Head of caudate nucleus (tissue), 42 donors: ENCODE measurements at regions of chr17 and their contacts with region 1.

Region 1: DNA sequence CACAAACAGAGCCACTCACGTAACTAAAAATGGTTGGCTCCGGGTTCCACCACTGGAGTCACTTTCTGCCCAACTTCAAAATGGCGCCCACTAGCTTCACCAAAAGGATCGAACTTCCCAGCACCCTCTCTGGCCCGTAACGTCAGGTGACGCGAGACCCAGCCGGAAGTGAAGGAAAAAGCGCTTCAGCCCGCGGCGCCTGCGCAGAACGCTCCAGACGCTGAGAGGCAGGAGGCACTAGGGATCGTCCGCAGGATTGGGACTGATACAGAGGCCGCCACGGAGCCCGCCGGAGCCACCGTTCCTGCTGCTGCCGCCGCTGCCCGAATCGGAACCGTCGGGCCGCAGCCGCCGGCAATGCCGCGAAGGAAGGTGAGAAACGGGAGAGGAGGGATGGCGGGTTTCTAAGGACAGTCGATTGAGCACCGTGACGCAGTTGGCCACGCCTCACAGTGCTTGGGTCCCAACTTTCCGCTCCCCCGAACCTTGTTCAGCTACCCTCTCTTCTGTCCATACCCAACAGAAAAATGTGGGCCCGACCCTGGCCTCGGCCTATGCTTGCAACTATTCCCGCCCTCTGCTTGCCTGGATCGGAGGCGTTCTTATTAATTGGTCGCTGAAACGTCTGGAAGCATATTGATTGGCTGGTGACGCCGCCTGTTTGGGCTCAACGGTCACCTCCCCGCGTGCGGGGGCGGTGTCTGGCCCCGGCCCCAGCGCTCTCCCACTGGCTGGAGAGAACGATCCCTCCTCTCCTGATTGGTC is at the start of gene KAT7:
- DNase-seq: peak; percentile 97 to 100 (median 99)

Region 2: DNA sequence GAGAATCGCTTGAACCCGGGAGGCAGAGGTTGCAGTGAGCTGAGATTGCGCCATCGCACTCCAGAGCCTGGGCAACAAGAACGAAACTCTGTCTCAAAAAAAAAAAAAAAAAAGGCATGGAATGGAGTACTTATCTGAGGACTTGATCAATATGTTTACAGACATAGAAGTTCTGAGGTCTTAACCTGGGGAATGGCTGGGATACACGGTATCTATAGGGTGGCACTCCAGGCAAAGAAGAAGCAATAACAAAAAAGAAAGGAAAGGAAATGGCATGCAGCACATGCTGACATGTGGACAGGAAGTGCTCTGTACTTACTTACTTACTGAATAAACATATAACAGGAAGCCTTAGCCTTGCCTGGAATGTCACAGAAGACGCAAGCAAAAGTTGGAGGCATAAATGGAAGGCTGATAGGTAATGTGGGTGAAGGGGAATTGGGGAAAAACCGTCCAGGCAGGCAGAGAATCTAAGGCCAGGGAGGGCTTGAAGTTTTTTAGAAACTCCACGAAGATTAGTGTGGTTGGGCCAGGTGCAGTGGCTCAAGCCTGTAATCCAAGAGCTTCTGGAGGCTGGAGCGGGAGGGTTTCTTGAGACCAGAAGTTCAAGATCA is 100.7 kb before region 1 on chr17:
- intact Hi-C with region 1: no loop called
- DNase-seq: no peak

Region 3: DNA sequence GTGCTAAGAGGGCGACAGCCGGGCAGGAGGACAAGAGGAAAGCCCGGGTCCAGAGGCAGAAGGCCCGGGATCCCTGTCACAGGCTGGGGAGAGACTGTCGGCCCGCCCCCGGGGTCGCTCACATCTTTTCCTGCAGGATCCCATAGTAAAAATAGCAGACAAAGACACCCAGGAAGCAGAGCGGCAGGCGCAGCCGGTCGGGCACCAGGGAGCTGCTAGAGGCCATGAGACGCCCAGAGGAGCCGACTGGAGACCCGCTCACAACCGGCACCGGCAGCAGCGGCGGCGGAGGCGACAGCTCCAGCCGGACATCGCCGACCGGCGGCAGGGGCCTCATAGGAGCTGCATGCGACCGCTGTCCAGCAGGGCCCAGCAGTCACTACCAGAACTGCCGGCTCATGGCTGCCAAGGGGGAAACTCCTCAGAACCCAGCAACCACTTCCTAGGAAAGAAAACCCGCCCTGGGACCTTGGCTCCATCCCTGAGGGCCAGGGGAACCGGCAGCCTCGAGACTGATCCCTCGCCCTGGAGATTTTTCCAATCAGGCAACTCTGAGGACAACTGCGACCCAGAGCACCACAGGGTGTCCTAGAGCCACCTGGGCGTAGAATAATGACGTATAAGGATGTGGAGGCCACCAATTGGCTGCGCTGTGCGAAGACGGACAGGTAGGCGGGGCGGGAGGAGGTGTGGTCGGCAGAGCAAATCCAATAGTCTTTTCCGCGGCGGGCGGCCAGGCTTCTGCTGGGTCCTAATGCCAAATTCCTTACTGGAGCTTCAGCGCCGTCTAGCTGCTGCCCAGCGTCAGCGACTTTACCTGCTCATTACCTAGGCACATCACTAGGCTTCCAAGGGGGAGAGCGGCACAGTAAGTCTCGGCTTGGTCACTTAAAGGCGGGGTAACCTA is 80.8 kb before region 1 on chr17 and contains the start of gene SLC35B1:
- intact Hi-C with region 1: loop called (anchors 2 kb)
- DNase-seq: peak; percentile 99 to 100 (median 99)

Region 4: GRCh38 chr17:49959183-49959935 is 170.7 kb after region 1 on chr17:
- intact Hi-C with region 1: no loop called
- DNase-seq: peak; percentile 34 to 92 (median 74)

Region 5: GRCh38 chr17:49980703-49981197 is 192.1 kb after region 1 on chr17:
- intact Hi-C with region 1: no loop called
- DNase-seq: no peak